PC-9 (cell line): ENCODE measurements at regions of chr11 and their contacts with region 1.

Region 1: GRCh38 chr11:61129639-61130523 is 27.6 kb downstream of the CD5 start:
- DNase-seq: peak; percentile 85 to 93
- H3K4me3 ChIP-seq: peak overlapping the region; percentile 37; the same call in 1 of the 2 replicates
- H3K27ac ChIP-seq: peak overlapping the region; percentile 40
- H3K4me1 ChIP-seq: peaks cover 19% of the 10 kb centered on the region
- H3K27me3 ChIP-seq: no peaks in the 10 kb centered on the region
- CTCF ChIP-seq: peak; percentile 100

Region 2: GRCh38 chr11:60913793-60914632 is 215.9 kb before region 1 on chr11 and contains the start of gene TMEM109:
- CTCF ChIA-PET with region 1: interaction called, 3 read pairs
- POLR2A ChIA-PET with region 1: interaction called, 3 read pairs
- intact Hi-C with region 1: loop called (anchors 1 kb)
- DNase-seq: peak; percentile 81 to 88
- H3K4me3 ChIP-seq: peak within 1 kb of the TSS; percentile 78
- H3K27ac ChIP-seq: peak within 1 kb of the TSS; percentile 62
- H3K4me1 ChIP-seq: peaks cover 36% of the 10 kb centered on the region
- H3K27me3 ChIP-seq: peaks cover 20% of the 10 kb centered on the region; the same call in 1 of the 2 replicates
- CTCF ChIP-seq: no peak
- total RNA-seq, gene TMEM109: 104 and 105 TPM in 2 replicates

Region 3: DNA sequence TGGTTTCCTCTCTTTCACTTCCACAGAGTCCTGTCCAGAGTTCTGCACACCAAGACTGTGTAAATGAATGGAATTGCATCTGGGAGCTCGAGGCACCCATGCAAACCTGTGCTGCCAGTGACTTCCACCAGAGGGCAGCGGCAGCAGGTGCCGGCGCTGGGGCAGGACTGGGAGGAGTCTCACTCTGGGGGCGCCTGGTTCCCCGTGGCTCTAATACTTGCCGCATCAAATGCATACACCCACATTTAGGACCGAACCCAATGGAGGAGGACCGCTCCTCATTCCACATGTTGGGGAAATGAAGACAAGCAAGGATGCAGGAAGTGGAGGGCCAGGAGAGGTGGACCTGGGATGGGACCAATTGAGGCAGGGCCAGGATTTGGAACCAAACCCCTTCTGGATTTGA is 159.5 kb before region 1 on chr11:
- CTCF ChIA-PET with region 1: interaction called, 6 read pairs
- POLR2A ChIA-PET with region 1: no interaction called
- intact Hi-C with region 1: loop called (anchors 1 kb)
- DNase-seq: peak in 1 of 2 experiments; percentile 69
- H3K4me3 ChIP-seq: no peak overlapping the region
- H3K27ac ChIP-seq: no peak overlapping the region
- H3K4me1 ChIP-seq: no peaks in the 10 kb centered on the region
- H3K27me3 ChIP-seq: peaks cover 14% of the 10 kb centered on the region
- CTCF ChIP-seq: peak; percentile 94

Region 4: GRCh38 chr11:61173456-61173855 is 43.6 kb after region 1 on chr11:
- CTCF ChIA-PET with region 1: no interaction called
- POLR2A ChIA-PET with region 1: no interaction called
- intact Hi-C with region 1: loop called (anchors 1 kb)
- DNase-seq: peak; percentile 35 to 86
- H3K4me3 ChIP-seq: no peak overlapping the region
- H3K27ac ChIP-seq: no peak overlapping the region
- H3K4me1 ChIP-seq: no peaks in the 10 kb centered on the region
- H3K27me3 ChIP-seq: peaks cover 24% of the 10 kb centered on the region
- CTCF ChIP-seq: peak; percentile 66